ENCODE measurements at regions of chr1 and their contacts with region 1.

Region 1: DNA sequence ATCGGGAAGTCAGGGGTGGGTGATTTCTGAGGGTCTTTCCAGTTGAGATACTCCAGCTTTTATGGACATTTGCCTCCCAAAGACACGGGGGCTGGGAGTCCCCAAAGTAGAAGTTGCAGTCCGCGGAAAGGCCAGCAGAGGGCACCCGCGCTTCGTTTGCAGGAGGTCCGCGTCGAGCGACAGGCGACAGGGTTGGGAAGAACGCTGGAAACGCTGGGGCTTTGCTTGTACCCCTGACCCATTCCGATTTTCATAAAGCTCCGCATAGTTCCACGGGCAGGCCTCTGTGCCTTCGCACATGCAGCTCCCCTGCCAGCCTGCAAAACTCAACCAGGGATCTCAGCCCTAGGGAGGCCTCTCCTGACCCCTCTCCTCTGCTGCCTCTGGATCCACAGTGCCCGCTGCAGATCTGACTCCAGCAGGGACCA is 44.2 kb upstream of the LAPTM5 start:
- DNase-seq: peak; percentile 79 to 90 (median 82)
- ATAC-seq: peak; percentile 87
- H3K4me3 ChIP-seq: no peak overlapping the region
- H3K27ac ChIP-seq: no peak overlapping the region
- H3K4me1 ChIP-seq: peaks cover 11 to 24% of the 10 kb centered on the region in 2 experiments; a peak in 4 of 5 replicates
- H3K27me3 ChIP-seq: no peaks in the 10 kb centered on the region; a peak in 1 of 5 replicates
- CTCF ChIP-seq: peak; percentile 96 to 99 (median 98)
- EP300 ChIP-seq: peak; percentile 32; the same call in 1 of the 2 replicates
- POLR2A ChIP-seq: no peak
- RAD21 ChIP-seq: peak; percentile 99 to 100

Region 2: GRCh38 chr1:30815596-30815995 is 13.8 kb after region 1 on chr1:
- CTCF ChIA-PET with region 1: no interaction called
- POLR2A ChIA-PET with region 1: interaction called, 13 read pairs
- in situ Hi-C with region 1: no loop called
- intact Hi-C with region 1: no loop called
- DNase-seq: no peak
- ATAC-seq: no peak
- H3K4me3 ChIP-seq: no peak overlapping the region
- H3K27ac ChIP-seq: no peak overlapping the region
- H3K4me1 ChIP-seq: peaks cover 5 to 14% of the 10 kb centered on the region in 2 experiments; a peak in 4 of 5 replicates
- H3K27me3 ChIP-seq: peaks cover 0 to 13% of the 10 kb centered on the region in 2 experiments; a peak in 2 of 5 replicates
- CTCF ChIP-seq: no peak
- EP300 ChIP-seq: no peak
- POLR2A ChIP-seq: no peak
- RAD21 ChIP-seq: no peak

Region 3: DNA sequence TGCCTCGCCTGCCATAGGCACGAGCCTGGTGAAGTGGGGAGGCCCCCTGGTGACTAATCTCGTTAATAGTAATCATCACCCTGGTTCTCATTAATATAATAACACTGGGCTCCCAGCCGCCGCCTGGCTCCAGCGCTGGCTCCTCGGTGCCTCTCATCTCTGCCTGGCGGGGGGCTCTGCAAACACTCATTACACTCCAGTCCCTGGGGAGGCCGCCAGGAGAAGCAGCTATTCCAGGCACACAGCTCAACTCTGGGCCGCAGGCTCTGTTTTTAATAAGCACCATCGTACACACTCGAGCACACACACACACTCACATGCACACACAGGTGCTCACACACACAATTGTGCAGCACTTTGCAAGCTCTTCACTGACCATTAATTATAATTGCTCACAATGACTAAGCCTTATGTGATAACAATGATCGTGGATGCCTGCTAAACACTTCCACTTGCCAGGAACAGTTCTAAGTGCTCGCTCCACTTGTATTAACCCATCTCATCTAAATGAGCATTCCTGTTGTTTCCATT is 54.5 kb after region 1 on chr1:
- CTCF ChIA-PET with region 1: interaction called, 3 read pairs
- POLR2A ChIA-PET with region 1: no interaction called
- in situ Hi-C with region 1: no loop called
- intact Hi-C with region 1: loop called (anchors 5 kb)
- DNase-seq: no peak
- ATAC-seq: no peak
- H3K4me3 ChIP-seq: no peak overlapping the region
- H3K27ac ChIP-seq: no peak overlapping the region
- H3K4me1 ChIP-seq: peaks cover 19 to 28% of the 10 kb centered on the region in 2 experiments
- H3K27me3 ChIP-seq: no peaks in the 10 kb centered on the region; a peak in 1 of 5 replicates
- CTCF ChIP-seq: no peak
- EP300 ChIP-seq: no peak
- POLR2A ChIP-seq: no peak
- RAD21 ChIP-seq: no peak

Region 4: DNA sequence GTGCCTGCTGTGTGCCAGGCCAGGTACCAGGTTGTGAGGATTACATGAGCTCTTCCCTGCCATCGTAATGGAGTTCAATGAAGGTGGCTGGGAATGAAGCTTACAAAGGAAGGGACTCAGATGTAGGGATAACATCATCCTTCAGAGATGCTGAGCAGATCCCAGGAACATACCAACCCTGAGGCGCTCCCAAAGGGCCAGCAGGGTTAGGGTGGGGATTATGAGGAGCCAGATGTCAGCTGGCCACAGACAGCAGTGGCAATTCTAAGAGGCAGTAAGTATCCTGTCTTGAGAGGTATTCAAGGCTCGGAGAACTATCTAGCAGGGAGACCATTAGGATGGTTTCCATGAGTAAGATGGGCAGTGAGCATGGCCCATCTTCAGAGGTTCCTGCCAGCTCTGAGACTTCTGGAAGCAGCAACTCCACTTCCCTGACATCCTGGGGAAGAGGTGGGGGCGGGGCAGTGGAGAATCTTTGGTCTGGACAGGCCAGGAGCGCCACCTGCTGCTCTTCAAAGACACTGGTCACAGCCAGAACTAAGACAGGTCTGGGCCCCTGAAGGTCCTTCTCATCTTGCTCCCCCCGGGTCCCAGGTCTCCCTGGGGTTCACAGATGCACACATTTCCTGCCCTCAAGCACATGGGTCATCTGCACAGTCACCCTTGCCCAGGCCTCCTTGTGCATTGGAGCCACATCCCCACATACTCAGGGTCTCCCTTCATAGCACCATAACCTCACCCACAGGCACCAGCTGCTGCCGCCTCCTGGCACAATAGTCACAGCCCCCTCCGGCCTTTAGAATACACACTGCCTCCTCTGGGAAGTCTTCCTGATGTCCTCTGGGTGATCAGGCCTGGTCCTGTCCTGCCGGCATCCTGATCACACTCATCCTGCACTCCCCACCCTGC is 109.5 kb after region 1 on chr1:
- CTCF ChIA-PET with region 1: interaction called, 109 read pairs
- POLR2A ChIA-PET with region 1: interaction called, 17 read pairs
- in situ Hi-C with region 1: loop called (anchors 5 kb)
- intact Hi-C with region 1: loop called (anchors 1 kb)
- DNase-seq: peak; percentile 80 to 94 (median 86)
- ATAC-seq: peak; percentile 78
- H3K4me3 ChIP-seq: no peak overlapping the region
- H3K27ac ChIP-seq: no peak overlapping the region
- H3K4me1 ChIP-seq: peaks cover 31 to 53% of the 10 kb centered on the region in 2 experiments
- H3K27me3 ChIP-seq: no peaks in the 10 kb centered on the region
- CTCF ChIP-seq: peak; percentile 96 to 97 (median 96)
- EP300 ChIP-seq: peak; percentile 31; the same call in 1 of the 2 replicates
- POLR2A ChIP-seq: no peak
- RAD21 ChIP-seq: peak; percentile 100

Region 5: GRCh38 chr1:30929135-30929889 is 127.5 kb after region 1 on chr1:
- CTCF ChIA-PET with region 1: interaction called, 35 read pairs
- POLR2A ChIA-PET with region 1: interaction called, 5 read pairs
- in situ Hi-C with region 1: no loop called
- intact Hi-C with region 1: loop called (anchors 1 kb)
- DNase-seq: peak; percentile 74 to 79 (median 78)
- ATAC-seq: peak; percentile 92
- H3K4me3 ChIP-seq: no peak overlapping the region
- H3K27ac ChIP-seq: no peak overlapping the region
- H3K4me1 ChIP-seq: no peaks in the 10 kb centered on the region; a peak in 2 of 5 replicates
- H3K27me3 ChIP-seq: no peaks in the 10 kb centered on the region
- CTCF ChIP-seq: peak; percentile 78 to 95 (median 90)
- EP300 ChIP-seq: no peak
- POLR2A ChIP-seq: no peak; the same call in 1 of the 2 replicates
- RAD21 ChIP-seq: peak; percentile 83 to 96

Measured in K562 (cell line).